ENCODE measurements at regions of chr7 and their contacts with region 1.

Region 1: DNA sequence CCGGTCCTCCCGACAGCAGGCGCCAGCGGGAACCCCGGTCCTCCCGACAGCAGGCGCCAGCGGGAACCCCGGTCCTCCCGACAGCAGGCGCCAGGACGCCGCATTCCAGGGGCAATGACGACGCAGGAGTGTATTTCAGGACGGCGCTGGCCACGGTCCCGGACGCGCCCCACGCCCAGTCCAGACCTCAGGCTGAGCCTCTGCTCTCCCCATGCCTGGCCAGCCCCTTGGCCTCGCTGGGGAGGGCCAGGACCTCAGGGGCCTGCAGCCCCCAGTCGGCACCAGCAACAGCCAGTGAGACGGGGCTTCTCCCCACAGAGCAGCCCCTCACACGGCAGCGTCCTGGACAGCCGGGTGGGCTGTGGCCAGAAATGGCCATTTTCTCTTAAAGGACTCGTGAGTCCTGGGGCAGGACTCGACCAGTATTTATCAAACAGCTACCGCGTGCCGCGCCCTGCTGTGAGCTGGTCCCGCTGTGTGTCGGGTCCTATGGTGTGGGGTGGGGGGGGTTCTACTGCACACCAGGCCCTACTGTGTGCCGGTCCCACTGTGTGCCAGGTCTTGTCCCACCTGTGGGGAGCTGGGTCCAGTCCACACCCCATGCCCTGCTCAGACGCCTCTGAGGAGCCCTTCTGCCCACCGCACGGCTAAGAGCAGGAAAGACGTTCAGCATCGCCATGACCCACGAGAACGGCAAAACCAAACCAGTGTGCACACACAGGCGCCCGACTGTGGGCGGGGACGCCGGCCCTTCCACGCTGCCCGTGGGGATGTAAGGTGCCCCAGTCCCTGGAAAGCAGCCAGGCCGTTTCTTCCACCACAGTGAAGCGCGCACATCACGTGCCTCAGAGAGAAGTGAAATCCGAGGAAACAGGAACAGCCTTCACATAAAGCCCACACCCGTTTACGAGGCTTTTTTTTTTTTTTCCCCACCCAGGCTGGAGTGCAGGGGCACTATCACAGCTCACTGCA is 33.3 kb downstream of the GET4 start:
- DNase-seq: peak in 6 of 7 donors; percentile 64 to 80 (median 73)
- H3K4me3 ChIP-seq: no peak overlapping the region
- H3K27ac ChIP-seq: no peak overlapping the region
- H3K4me1 ChIP-seq: peaks cover 0 to 4% of the 10 kb centered on the region in 2 donors
- H3K27me3 ChIP-seq: no peaks in the 10 kb centered on the region
- CTCF ChIP-seq: no peak
- POLR2A ChIP-seq: no peak

Region 2: GRCh38 chr7:1065263-1066260 is 155.9 kb after region 1 on chr7:
- intact Hi-C with region 1: loop called in 1 of 2 experiments (anchors 5 kb)
- DNase-seq: peak; percentile 77 to 91 (median 90)
- H3K4me3 ChIP-seq: peak overlapping the region in 1 of 4 donors; percentile 12
- H3K27ac ChIP-seq: no peak overlapping the region
- H3K4me1 ChIP-seq: peaks cover 4 to 9% of the 10 kb centered on the region in 2 donors
- H3K27me3 ChIP-seq: no peaks in the 10 kb centered on the region
- CTCF ChIP-seq: peak; percentile 88 to 98 (median 93)
- POLR2A ChIP-seq: no peak